ENCODE measurements at regions of chr7 and their contacts with region 1.

Region 1: GRCh38 chr7:66204822-66205740 is at the start of gene TPST1:
- DNase-seq: peak; percentile 84
- ATAC-seq: peak; percentile 97
- H3K4me3 ChIP-seq: peak within 1 kb of the TSS; percentile 77
- H3K27ac ChIP-seq: peak within 1 kb of the TSS; percentile 74
- H3K4me1 ChIP-seq: peaks cover 6% of the 10 kb centered on the region
- H3K27me3 ChIP-seq: 0 out of 2 replicates have a peak, but pooled peaks cover 2% of the 10 kb centered on the region
- CTCF ChIP-seq: peak; percentile 56
- POLR2A ChIP-seq: peak; percentile 95
- RAD21 ChIP-seq: peak; percentile 57
- total RNA-seq, gene TPST1: 49.7 and 58.6 TPM in 2 replicates

Region 2: DNA sequence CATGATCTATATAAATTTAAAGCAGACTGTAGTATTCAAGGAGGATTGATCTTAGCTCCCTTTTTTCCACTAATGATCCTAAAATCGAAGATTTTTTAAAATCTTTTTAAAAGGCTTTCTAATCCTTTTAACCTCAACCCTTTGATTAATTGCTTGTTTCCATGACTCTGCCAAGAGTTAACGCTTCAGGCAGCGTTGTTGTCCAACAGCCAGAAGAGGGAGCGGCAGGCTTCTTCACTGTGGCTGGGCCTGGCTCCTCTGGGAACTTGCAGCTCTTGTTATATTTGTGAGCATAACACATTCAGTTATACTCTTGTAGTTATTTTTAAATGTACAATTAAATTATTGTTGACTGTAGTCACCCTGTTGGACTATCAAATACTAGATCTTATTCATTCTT is 64.2 kb before region 1 on chr7:
- CTCF ChIA-PET with region 1: interaction called, 6 read pairs
- POLR2A ChIA-PET with region 1: no interaction called
- dilution Hi-C with region 1: no loop called
- in situ Hi-C with region 1: no loop called
- intact Hi-C with region 1: loop called (anchors 10 kb)
- DNase-seq: peak; percentile 84
- ATAC-seq: peak; percentile 72
- H3K4me3 ChIP-seq: no peak overlapping the region
- H3K27ac ChIP-seq: no peak overlapping the region; the same call in 1 of the 2 replicates
- H3K4me1 ChIP-seq: peaks cover 26% of the 10 kb centered on the region
- H3K27me3 ChIP-seq: no peaks in the 10 kb centered on the region
- CTCF ChIP-seq: peak; percentile 79
- POLR2A ChIP-seq: no peak
- RAD21 ChIP-seq: peak; percentile 85

Region 3: DNA sequence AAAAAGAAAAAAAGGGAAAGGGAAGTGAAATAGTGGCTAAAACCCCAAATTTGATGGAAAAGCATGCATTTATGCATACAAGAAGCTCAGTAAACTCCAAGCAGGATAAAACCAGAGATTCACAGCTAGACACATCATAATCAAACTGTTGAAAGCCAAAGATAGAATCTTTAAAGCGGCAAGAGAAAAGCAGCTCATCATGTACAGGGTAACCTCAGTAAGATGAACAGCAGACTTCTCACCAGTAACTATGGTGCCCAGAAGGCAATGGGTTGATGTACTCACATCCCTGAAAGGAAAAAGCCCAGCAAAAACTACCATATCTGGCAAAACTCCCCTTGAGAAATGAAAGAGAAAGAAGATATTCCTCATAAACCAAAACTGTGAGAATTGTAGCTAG is 60.5 kb after region 1 on chr7:
- CTCF ChIA-PET with region 1: no interaction called
- POLR2A ChIA-PET with region 1: no interaction called
- dilution Hi-C with region 1: no loop called
- in situ Hi-C with region 1: no loop called
- intact Hi-C with region 1: loop called (anchors 5 kb)
- DNase-seq: peak; percentile 45
- ATAC-seq: no peak
- H3K4me3 ChIP-seq: no peak overlapping the region
- H3K27ac ChIP-seq: no peak overlapping the region
- H3K4me1 ChIP-seq: peaks cover 4% of the 10 kb centered on the region; the same call in 1 of the 2 replicates
- H3K27me3 ChIP-seq: no peaks in the 10 kb centered on the region
- CTCF ChIP-seq: no peak
- POLR2A ChIP-seq: no peak
- RAD21 ChIP-seq: no peak

Region 4: GRCh38 chr7:66330961-66331360 is 125.9 kb after region 1 on chr7:
- CTCF ChIA-PET with region 1: interaction called, 4 read pairs
- POLR2A ChIA-PET with region 1: no interaction called
- dilution Hi-C with region 1: no loop called
- in situ Hi-C with region 1: no loop called
- intact Hi-C with region 1: loop called (anchors 5 kb)
- DNase-seq: peak; percentile 52
- ATAC-seq: peak; percentile 26; the same call in 1 of the 2 replicates
- H3K4me3 ChIP-seq: no peak overlapping the region
- H3K27ac ChIP-seq: peak overlapping the region; percentile 27; the same call in 1 of the 2 replicates
- H3K4me1 ChIP-seq: peaks cover 10% of the 10 kb centered on the region
- H3K27me3 ChIP-seq: no peaks in the 10 kb centered on the region
- CTCF ChIP-seq: no peak
- POLR2A ChIP-seq: no peak
- RAD21 ChIP-seq: no peak

Region 5: DNA sequence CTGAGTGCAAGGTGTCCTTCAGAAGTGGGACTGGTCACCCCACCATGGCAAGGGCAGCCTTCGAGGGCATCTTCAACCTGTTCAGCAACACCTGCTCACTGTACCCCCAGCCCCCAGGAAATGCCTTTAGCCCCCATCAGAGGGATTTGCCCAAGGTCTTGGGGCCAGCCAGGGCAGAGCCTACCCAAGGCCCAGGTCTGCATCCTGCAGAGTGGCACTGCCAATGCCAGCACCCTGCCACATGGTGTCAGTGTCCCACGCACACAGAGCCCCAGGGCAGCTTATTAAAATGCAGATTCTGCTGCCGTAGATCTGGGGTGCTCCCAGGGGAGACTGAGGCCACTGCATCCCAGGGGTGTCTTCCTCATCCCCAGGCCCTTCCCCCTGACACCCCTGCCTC is 317.4 kb after region 1 on chr7:
- CTCF ChIA-PET with region 1: no interaction called
- POLR2A ChIA-PET with region 1: no interaction called
- dilution Hi-C with region 1: no loop called
- in situ Hi-C with region 1: no loop called
- intact Hi-C with region 1: no loop called
- DNase-seq: no peak
- ATAC-seq: peak; percentile 54; the same call in 1 of the 2 replicates
- H3K4me3 ChIP-seq: no peak overlapping the region
- H3K27ac ChIP-seq: no peak overlapping the region
- H3K4me1 ChIP-seq: no peaks in the 10 kb centered on the region
- H3K27me3 ChIP-seq: no peaks in the 10 kb centered on the region
- CTCF ChIP-seq: peak; percentile 25
- POLR2A ChIP-seq: no peak
- RAD21 ChIP-seq: peak; percentile 30; the same call in 1 of the 2 replicates

Region 6: DNA sequence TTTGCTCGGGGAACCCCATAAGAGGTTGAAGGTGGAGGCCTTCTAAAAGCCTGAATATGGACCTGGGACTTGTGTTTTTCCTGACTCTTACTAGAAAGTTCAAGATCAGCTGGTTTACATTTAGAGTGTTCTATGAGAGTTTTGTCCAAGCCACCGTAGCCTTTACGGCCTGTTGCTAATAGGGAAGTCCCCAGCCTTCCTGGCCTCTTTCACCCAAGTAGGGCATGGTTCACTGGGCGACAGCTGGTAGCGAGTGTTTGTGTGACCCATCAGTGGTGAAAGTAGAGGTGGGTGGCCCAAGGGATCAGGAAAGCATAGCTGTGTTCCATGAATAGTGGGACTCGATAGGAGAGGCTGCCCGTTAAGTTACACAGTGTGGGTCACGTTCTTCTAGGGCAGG is 595.5 kb after region 1 on chr7:
- CTCF ChIA-PET with region 1: no interaction called
- POLR2A ChIA-PET with region 1: no interaction called
- dilution Hi-C with region 1: no loop called
- in situ Hi-C with region 1: no loop called
- intact Hi-C with region 1: no loop called
- DNase-seq: no peak
- ATAC-seq: no peak
- H3K4me3 ChIP-seq: no peak overlapping the region
- H3K27ac ChIP-seq: no peak overlapping the region
- H3K4me1 ChIP-seq: no peaks in the 10 kb centered on the region
- H3K27me3 ChIP-seq: no peaks in the 10 kb centered on the region
- CTCF ChIP-seq: no peak
- POLR2A ChIP-seq: no peak
- RAD21 ChIP-seq: no peak